Dendritic cell treated with granulocyte-macrophage colony-stimulating factor and Interleukin-4, amounts not matched to agents 40 ng/mL and 50 ng/mL, for 4 days (primary cell): ENCODE measurements at regions of chr4 and their contacts with region 1.

Region 1: GRCh38 chr4:122732329-122733026 is at the start of gene BBS12:
- H3K4me3 Mint-ChIP-seq: peak within 1 kb of the TSS; percentile 96
- H3K27ac Mint-ChIP-seq: peak within 1 kb of the TSS; percentile 96
- H3K4me1 Mint-ChIP-seq: peaks cover 22% of the 10 kb centered on the region
- H3K27me3 Mint-ChIP-seq: no peaks in the 10 kb centered on the region

Region 2: GRCh38 chr4:122542411-122543236 is 189.9 kb before region 1 on chr4:
- intact Hi-C with region 1: no loop called
- H3K4me3 Mint-ChIP-seq: no peak overlapping the region
- H3K27ac Mint-ChIP-seq: no peak overlapping the region
- H3K4me1 Mint-ChIP-seq: peaks cover 6% of the 10 kb centered on the region
- H3K27me3 Mint-ChIP-seq: peaks cover 2% of the 10 kb centered on the region

Region 3: GRCh38 chr4:122827879-122828601 is 95.6 kb after region 1 on chr4:
- intact Hi-C with region 1: no loop called
- H3K4me3 Mint-ChIP-seq: peak overlapping the region; percentile 71
- H3K27ac Mint-ChIP-seq: no peak overlapping the region
- H3K4me1 Mint-ChIP-seq: peaks cover 13% of the 10 kb centered on the region
- H3K27me3 Mint-ChIP-seq: peaks cover 77% of the 10 kb centered on the region

Region 4: DNA sequence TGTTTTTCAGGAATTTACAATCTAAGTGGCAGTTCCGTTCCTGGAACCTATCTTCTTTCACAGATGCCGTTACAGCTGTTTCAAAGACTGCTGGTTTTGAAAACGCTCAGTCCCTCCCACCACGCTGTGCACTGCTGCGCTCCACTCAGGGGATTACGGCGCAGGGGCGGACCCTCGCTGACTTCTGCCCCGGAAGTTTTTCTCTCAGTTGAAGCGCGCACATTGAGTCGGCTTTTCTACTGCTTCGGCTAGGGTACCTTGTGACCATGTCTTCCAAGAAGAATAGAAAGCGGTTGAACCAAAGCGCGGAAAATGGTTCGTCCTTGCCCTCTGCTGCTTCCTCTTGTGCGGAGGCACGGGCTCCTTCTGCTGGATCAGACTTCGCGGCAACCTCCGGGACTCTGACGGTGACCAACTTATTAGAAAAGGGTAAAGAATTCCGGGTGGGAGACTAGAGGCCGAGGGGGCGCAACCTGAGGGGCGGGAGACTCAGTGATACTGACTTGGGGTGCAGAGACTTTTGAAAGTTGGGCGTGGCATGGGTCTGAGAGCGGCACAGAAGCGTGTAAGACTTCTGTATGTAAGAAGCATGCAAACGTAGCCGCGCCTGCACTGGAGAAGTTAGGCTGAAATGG is 190.5 kb after region 1 on chr4:
- intact Hi-C with region 1: loop called (anchors 1 kb)
- H3K4me3 Mint-ChIP-seq: peak overlapping the region; percentile 87
- H3K27ac Mint-ChIP-seq: peak overlapping the region; percentile 93
- H3K4me1 Mint-ChIP-seq: no peaks in the 10 kb centered on the region
- H3K27me3 Mint-ChIP-seq: no peaks in the 10 kb centered on the region